Left ventricle myocardium inferior (tissue), 1 donor: ENCODE measurements at regions of chr3 and their contacts with region 1.

Region 1: GRCh38 chr3:63193629-63194028 is 84.5 kb upstream of the SYNPR start:
- DNase-seq: no peak
- H3K4me3 ChIP-seq: no peak overlapping the region
- H3K27ac ChIP-seq: no peak overlapping the region
- H3K4me1 ChIP-seq: no peaks in the 10 kb centered on the region
- H3K27me3 ChIP-seq: no peaks in the 10 kb centered on the region
- CTCF ChIP-seq: peak; percentile 62

Region 2: GRCh38 chr3:62665598-62666437 is 527.8 kb before region 1 on chr3:
- intact Hi-C with region 1: loop called (anchors 5 kb)
- DNase-seq: peak; percentile 58
- H3K4me3 ChIP-seq: no peak overlapping the region
- H3K27ac ChIP-seq: no peak overlapping the region
- H3K4me1 ChIP-seq: peaks cover 16% of the 10 kb centered on the region
- H3K27me3 ChIP-seq: peaks cover 7% of the 10 kb centered on the region
- CTCF ChIP-seq: peak; percentile 78

Region 3: GRCh38 chr3:63556401-63556800 is 362.8 kb after region 1 on chr3:
- intact Hi-C with region 1: no loop called
- DNase-seq: no peak
- H3K4me3 ChIP-seq: no peak overlapping the region
- H3K27ac ChIP-seq: no peak overlapping the region
- H3K4me1 ChIP-seq: no peaks in the 10 kb centered on the region
- H3K27me3 ChIP-seq: no peaks in the 10 kb centered on the region
- CTCF ChIP-seq: no peak

Region 4: GRCh38 chr3:63740116-63740515 is 546.5 kb after region 1 on chr3:
- intact Hi-C with region 1: no loop called
- DNase-seq: no peak
- H3K4me3 ChIP-seq: no peak overlapping the region
- H3K27ac ChIP-seq: no peak overlapping the region
- H3K4me1 ChIP-seq: no peaks in the 10 kb centered on the region
- H3K27me3 ChIP-seq: no peaks in the 10 kb centered on the region
- CTCF ChIP-seq: no peak